ENCODE measurements at regions of chr15 and their contacts with region 1.

Region 1: GRCh38 chr15:55318588-55319494 is at the starts of genes PIGB and PIGBOS1:
- DNase-seq: peak; percentile 62 to 86 (median 84)
- H3K4me3 ChIP-seq: peak within 1 kb of the TSS; percentile 91
- H3K4me3 Mint-ChIP-seq: peak within 1 kb of the TSS; percentile 98 to 100 (median 98)
- H3K27ac ChIP-seq: peak within 1 kb of the TSS; percentile 99
- H3K27ac Mint-ChIP-seq: peak within 1 kb of the TSS; percentile 99 to 100 (median 100)
- H3K4me1 ChIP-seq: peaks cover 38% of the 10 kb centered on the region
- H3K4me1 Mint-ChIP-seq: peaks cover 70 to 86% (median 81%) of the 10 kb centered on the region in 3 donors
- H3K27me3 ChIP-seq: no peaks in the 10 kb centered on the region
- H3K27me3 Mint-ChIP-seq: peaks cover 0 to 2% of the 10 kb centered on the region in 2 donors
- total RNA-seq, gene PIGB: 17.4 to 17.9 TPM
- total RNA-seq, gene PIGBOS1: 11.5 to 11.9 TPM

Region 2: DNA sequence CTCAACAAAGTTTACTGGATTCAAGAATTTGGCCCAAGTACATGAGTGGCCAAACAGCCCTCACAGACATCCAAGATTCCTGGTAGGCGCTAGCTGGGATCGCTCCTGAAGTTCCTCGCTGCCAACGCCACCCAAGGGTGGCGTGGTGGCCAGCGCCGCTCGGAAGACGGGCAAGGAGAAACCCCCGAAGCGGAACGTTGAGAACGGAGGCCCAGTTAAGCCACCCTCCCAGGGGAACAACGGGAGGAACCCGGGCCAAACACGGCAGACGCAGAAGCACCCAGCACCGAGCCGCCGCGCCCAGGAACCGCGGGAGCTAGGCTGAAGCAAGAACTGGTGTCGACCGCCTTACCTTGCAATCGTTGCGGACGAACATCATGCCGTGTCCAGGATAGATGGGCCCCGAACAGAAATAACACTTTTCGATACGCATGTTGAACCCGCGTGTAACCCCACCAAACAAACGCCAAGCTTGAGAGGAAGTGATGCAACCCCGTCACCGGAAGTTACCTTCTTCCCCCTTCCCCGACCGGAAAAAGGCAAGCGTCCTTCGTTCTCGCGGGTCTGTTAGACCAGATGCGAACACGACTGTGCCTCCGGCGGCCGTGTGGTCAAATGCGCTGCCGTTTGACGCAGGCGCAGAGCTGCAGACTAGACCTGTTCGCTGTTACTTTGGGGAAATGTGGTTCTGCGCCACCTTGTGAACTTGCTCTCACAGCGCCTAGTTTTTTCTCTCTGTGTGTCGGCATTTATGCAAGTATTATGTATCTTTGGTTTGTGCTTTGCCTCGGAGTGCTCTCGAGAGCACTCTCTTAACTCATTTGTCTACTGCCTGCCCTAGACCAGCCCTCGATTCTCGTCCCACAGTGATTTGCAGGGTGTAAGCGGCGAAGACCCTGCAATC is 122.1 kb before region 1 on chr15 and contains the start of gene RSL24D1:
- CTCF ChIA-PET with region 1: interaction called, 6 read pairs
- POLR2A ChIA-PET with region 1: interaction called, 19 read pairs
- DNase-seq: peak; percentile 92 to 98 (median 96)
- H3K4me3 ChIP-seq: peak within 1 kb of the TSS; percentile 97
- H3K4me3 Mint-ChIP-seq: no peak within 1 kb of the TSS
- H3K27ac ChIP-seq: peak within 1 kb of the TSS; percentile 94
- H3K27ac Mint-ChIP-seq: no peak within 1 kb of the TSS
- H3K4me1 ChIP-seq: peaks cover 36% of the 10 kb centered on the region
- H3K4me1 Mint-ChIP-seq: peaks cover 13 to 33% (median 15%) of the 10 kb centered on the region in 3 donors
- H3K27me3 ChIP-seq: no peaks in the 10 kb centered on the region
- H3K27me3 Mint-ChIP-seq: no peaks in the 10 kb centered on the region
- total RNA-seq, gene RSL24D1: 145 to 154 TPM

Region 3: DNA sequence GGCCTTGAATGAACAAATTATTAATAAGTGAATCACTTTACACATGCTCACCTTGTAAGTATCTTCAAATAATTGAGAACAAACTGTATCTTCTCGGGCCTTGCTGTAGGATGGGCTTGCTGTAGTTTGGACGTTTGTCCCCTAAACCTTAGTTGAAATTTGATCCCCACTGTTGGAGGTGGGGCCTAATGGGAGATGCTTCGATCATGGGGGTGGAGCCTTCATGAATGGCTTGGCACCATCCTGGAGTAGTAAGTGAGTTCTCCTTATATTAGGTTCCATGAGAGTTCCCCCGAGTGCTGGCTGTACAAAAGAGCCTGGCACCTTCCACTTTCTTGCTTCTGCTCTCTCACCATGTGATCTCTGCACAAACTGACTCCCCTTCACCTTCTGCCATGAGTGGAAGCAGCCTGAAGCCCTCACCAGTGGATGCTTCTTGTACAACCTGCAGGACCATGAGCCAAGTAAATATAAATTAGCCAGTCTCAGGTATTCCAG is 29.5 kb after region 1 on chr15:
- CTCF ChIA-PET with region 1: no interaction called
- POLR2A ChIA-PET with region 1: no interaction called
- DNase-seq: no peak
- H3K4me3 ChIP-seq: no peak overlapping the region
- H3K4me3 Mint-ChIP-seq: no peak overlapping the region
- H3K27ac ChIP-seq: no peak overlapping the region
- H3K27ac Mint-ChIP-seq: peak overlapping the region in 2 of 8 donors; percentile 49 to 50
- H3K4me1 ChIP-seq: no peaks in the 10 kb centered on the region
- H3K4me1 Mint-ChIP-seq: peaks cover 0 to 5% (median 0%) of the 10 kb centered on the region in 3 donors
- H3K27me3 ChIP-seq: no peaks in the 10 kb centered on the region
- H3K27me3 Mint-ChIP-seq: no peaks in the 10 kb centered on the region

Region 4: GRCh38 chr15:55434989-55435825 is 116.4 kb after region 1 on chr15:
- CTCF ChIA-PET with region 1: interaction called, 11 read pairs
- POLR2A ChIA-PET with region 1: no interaction called
- DNase-seq: peak in 2 of 5 donors; percentile 12 to 37
- H3K4me3 ChIP-seq: no peak overlapping the region
- H3K4me3 Mint-ChIP-seq: no peak overlapping the region
- H3K27ac ChIP-seq: no peak overlapping the region
- H3K27ac Mint-ChIP-seq: no peak overlapping the region
- H3K4me1 ChIP-seq: no peaks in the 10 kb centered on the region
- H3K4me1 Mint-ChIP-seq: peaks cover 5 to 13% (median 12%) of the 10 kb centered on the region in 3 donors
- H3K27me3 ChIP-seq: no peaks in the 10 kb centered on the region
- H3K27me3 Mint-ChIP-seq: peaks cover 4 to 7% of the 10 kb centered on the region in 2 donors